ENCODE measurements at regions of chr6 and their contacts with region 1.

Region 1: DNA sequence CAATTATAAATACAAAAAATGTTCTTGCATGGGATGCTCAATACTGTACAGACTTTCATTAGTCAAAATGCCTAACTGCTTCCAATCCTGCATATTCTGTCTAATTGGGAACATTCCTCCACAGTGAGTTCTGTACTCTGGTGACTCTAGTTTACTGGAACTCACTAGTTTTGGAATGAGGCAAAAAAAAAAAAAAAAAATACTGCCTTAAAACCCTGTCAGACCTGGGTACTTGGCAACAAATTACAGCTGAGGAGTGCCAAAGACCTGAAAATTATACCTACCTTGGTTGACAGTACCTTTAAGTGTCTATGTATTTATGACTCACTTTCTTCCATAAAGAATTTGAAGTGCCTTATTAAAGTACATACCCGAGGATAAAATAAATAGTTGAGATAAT is 276.7 kb downstream of the FARS2 start:
- DNase-seq: no peak

Region 2: GRCh38 chr6:5389086-5389745 is 148.8 kb before region 1 on chr6:
- intact Hi-C with region 1: no loop called
- DNase-seq: no peak

Region 3: DNA sequence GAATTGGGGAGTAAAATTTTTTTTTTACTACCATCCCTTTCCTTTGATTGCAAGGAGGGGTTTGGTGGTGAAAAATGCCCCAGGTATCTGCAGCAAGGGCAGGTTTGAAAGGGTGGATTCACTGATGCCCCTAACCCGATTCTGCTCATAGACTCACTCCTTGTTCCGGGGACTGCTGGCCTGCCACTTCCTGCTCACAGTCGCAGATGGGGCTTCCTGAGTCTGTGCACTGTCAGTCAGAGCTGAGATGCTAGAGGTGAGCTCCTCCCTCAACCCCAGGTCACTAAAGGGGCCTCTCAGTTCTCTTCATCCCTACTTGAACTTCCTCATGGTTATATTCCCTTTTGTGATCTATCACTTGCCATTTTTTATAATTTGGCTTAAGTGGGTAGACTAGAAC is 81.3 kb after region 1 on chr6:
- intact Hi-C with region 1: no loop called
- DNase-seq: no peak

Region 4: GRCh38 chr6:6105472-6106036 is 567.6 kb after region 1 on chr6:
- intact Hi-C with region 1: no loop called
- DNase-seq: no peak

Region 5: GRCh38 chr6:6712258-6712999 is 1174.5 kb after region 1 on chr6:
- intact Hi-C with region 1: loop called in 1 of 2 experiments (anchors 5 kb)
- DNase-seq: no peak

Measured in posterior vena cava (tissue), 2 donors.